ENCODE measurements at regions of chr12 and their contacts with region 1.

Region 1: GRCh38 chr12:89589753-89590152 is 63.9 kb upstream of the POC1B start:
- H3K4me3 Mint-ChIP-seq: no peak overlapping the region
- H3K27ac Mint-ChIP-seq: no peak overlapping the region
- H3K4me1 Mint-ChIP-seq: peaks cover 8% of the 10 kb centered on the region
- H3K27me3 Mint-ChIP-seq: no peaks in the 10 kb centered on the region

Region 2: GRCh38 chr12:89621521-89621920 is 31.8 kb after region 1 on chr12:
- intact Hi-C with region 1: loop called (anchors 5 kb)
- H3K4me3 Mint-ChIP-seq: no peak overlapping the region
- H3K27ac Mint-ChIP-seq: no peak overlapping the region
- H3K4me1 Mint-ChIP-seq: peaks cover 6% of the 10 kb centered on the region
- H3K27me3 Mint-ChIP-seq: no peaks in the 10 kb centered on the region

Measured in dendritic cell treated with granulocyte-macrophage colony-stimulating factor and Interleukin-4, amounts not matched to agents 40 ng/mL and 50 ng/mL, for 4 days (primary cell).